ENCODE measurements at regions of chr17 and their contacts with region 1.

Region 1: DNA sequence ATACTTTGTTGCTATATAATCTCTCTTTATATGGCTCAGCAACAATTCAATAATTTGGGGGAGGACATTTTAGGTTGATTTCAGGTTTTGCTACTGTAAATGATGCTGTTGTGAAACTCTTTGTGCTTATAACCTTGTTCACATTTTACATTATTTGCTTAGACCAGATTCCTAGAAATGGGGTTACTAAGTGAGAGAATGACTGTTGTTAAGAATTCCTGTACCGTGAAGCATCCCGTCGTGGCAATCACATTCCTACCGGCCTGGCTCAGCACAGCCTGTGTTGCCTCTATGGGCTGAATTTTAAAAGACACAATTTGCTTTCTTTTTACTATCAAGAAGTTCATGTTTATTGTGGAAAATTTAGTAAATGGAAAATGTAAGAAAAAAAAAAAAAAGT is 31.4 kb downstream of the B9D1 start:
- DNase-seq: peak; percentile 59

Region 2: DNA sequence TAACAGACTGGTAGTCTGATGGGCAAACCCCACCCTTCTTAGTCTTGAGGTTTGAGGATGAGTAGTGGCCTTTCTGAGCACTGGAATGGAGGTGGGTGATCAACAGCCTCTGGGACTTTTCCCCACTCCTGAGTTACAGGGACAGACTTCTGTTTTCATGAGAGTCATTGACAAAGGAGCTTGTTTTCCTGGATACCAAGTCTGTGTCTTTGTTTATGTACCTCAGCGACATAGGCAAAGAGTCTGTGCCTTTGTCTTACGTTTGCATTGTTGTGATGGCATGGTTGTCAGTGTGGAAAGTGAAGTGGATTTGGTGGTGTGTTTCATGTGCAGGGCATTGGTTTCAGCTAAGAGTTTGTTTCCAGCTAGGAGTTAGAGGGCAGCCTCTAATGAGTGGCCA is 76.5 kb before region 1 on chr17:
- intact Hi-C with region 1: loop called in 1 of 2 experiments (anchors 5 kb)
- DNase-seq: no peak

Region 3: GRCh38 chr17:19284005-19284959 is 46.9 kb before region 1 on chr17:
- intact Hi-C with region 1: no loop called
- DNase-seq: no peak